Endothelial cell of umbilical vein (primary cell): ENCODE measurements at regions of chr12 and their contacts with region 1.

Region 1: DNA sequence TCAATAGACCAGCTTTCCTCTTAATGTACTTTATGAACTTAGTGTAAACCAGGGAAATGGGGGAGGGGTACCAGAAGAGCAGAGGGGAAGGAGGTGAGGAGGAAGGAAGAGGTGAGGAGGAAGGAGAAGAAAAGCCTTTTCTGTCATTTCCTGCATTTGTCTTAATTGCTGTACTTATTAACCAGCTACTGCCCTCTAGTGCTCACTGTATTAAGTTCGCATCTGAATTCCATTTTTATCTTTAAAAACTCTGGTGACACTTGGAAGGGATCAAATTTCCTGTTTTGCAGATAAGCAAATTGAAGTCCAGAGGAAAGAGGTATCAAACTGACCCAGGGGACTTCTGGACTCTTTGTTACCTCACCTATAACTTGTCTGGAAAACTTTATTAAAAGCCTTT is 22.2 kb downstream of the MANSC1 start:
- DNase-seq: peak; percentile 71
- H3K4me3 ChIP-seq: no peak overlapping the region
- H3K27ac ChIP-seq: peak overlapping the region; percentile 48
- H3K4me1 ChIP-seq: peaks cover 8% of the 10 kb centered on the region
- H3K27me3 ChIP-seq: no peaks in the 10 kb centered on the region
- CTCF ChIP-seq: peak; percentile 49 to 61
- POLR2A ChIP-seq: no peak

Region 2: GRCh38 chr12:11927286-11927935 is 400.4 kb before region 1 on chr12:
- CTCF ChIA-PET with region 1: no interaction called
- POLR2A ChIA-PET with region 1: no interaction called
- dilution Hi-C with region 1: no loop called
- intact Hi-C with region 1: no loop called
- DNase-seq: no peak
- H3K4me3 ChIP-seq: no peak overlapping the region
- H3K27ac ChIP-seq: no peak overlapping the region
- H3K4me1 ChIP-seq: no peaks in the 10 kb centered on the region
- H3K27me3 ChIP-seq: peaks cover 0 to 16% of the 10 kb centered on the region in 2 experiments
- CTCF ChIP-seq: no peak
- POLR2A ChIP-seq: no peak

Region 3: DNA sequence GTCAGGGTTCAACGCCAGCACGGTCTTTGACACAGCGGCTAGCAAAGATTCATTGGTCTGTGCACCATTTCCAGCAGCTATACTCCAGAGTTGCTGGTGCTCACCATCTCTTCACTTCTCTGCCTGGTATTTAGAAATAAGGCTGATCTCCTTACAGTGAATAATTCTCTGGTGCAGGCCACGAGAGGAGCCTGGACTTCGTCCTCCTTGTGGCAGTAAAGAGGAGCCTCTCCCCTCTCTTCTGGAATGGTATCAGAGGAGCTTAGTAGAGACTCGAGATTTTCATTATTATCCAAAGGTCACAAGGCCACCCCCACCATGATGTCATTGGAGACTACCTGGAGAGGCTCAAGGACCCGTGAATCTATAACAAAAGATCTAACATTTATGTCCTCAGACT is 287.9 kb before region 1 on chr12:
- CTCF ChIA-PET with region 1: interaction called, 80 read pairs
- POLR2A ChIA-PET with region 1: no interaction called
- dilution Hi-C with region 1: no loop called
- intact Hi-C with region 1: loop called (anchors 2 kb)
- DNase-seq: no peak
- H3K4me3 ChIP-seq: no peak overlapping the region
- H3K27ac ChIP-seq: no peak overlapping the region
- H3K4me1 ChIP-seq: no peaks in the 10 kb centered on the region
- H3K27me3 ChIP-seq: peaks cover 4 to 6% of the 10 kb centered on the region in 2 experiments
- CTCF ChIP-seq: no peak
- POLR2A ChIP-seq: no peak

Region 4: GRCh38 chr12:12081836-12082497 is 245.8 kb before region 1 on chr12:
- CTCF ChIA-PET with region 1: interaction called, 155 read pairs
- POLR2A ChIA-PET with region 1: no interaction called
- dilution Hi-C with region 1: loop called (anchors 25 kb)
- intact Hi-C with region 1: loop called (anchors 1 kb)
- DNase-seq: peak; percentile 79
- H3K4me3 ChIP-seq: no peak overlapping the region
- H3K27ac ChIP-seq: peak overlapping the region; percentile 40
- H3K4me1 ChIP-seq: peaks cover 5% of the 10 kb centered on the region
- H3K27me3 ChIP-seq: no peaks in the 10 kb centered on the region
- CTCF ChIP-seq: peak; percentile 17 to 29
- POLR2A ChIP-seq: no peak

Region 5: DNA sequence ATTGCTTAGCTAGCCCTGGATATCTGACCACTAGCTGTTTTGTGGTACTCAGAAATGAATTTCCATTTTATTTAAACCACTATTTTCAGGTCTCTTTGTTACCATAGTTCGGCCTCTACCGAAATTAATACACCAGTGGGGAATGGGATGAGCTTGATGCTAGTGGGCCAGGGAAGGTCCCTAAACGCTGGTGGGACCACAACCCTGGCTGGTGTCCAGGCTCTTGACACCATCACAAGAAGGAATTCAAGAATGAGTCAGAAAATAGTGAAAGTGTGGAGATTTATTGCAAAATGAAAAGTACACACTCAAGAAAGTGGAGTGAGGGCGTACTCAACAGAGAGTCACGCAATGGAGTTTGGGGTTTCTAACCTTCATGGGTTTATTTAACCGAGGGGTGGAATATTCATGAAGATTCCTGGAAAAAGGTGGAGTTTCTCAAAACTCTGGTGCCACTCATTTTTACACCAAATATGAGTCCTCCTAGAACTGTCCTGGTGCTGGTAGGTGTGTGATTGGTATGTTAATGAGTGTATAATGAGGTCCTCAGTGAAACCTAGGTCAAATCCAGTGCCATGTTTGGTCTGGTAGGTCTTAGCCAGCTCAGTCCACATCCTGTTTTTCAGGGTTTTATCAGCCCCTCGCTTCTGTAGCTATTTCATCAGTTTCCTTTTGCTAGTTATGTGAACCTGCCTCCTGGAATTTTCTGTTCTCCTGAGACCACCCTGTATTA is 22.1 kb before region 1 on chr12:
- CTCF ChIA-PET with region 1: interaction called, 11 read pairs
- POLR2A ChIA-PET with region 1: no interaction called
- dilution Hi-C with region 1: no loop called
- intact Hi-C with region 1: no loop called
- DNase-seq: peak; percentile 30
- H3K4me3 ChIP-seq: no peak overlapping the region
- H3K27ac ChIP-seq: no peak overlapping the region
- H3K4me1 ChIP-seq: no peaks in the 10 kb centered on the region
- H3K27me3 ChIP-seq: no peaks in the 10 kb centered on the region
- CTCF ChIP-seq: no peak
- POLR2A ChIP-seq: no peak

Region 6: GRCh38 chr12:12510141-12510540 is 182.3 kb after region 1 on chr12:
- CTCF ChIA-PET with region 1: no interaction called
- POLR2A ChIA-PET with region 1: no interaction called
- dilution Hi-C with region 1: no loop called
- intact Hi-C with region 1: no loop called
- DNase-seq: no peak
- H3K4me3 ChIP-seq: no peak overlapping the region
- H3K27ac ChIP-seq: no peak overlapping the region
- H3K4me1 ChIP-seq: peaks cover 16% of the 10 kb centered on the region
- H3K27me3 ChIP-seq: no peaks in the 10 kb centered on the region
- CTCF ChIP-seq: no peak
- POLR2A ChIP-seq: no peak